ENCODE measurements at regions of chr2 and their contacts with region 1.

Region 1: DNA sequence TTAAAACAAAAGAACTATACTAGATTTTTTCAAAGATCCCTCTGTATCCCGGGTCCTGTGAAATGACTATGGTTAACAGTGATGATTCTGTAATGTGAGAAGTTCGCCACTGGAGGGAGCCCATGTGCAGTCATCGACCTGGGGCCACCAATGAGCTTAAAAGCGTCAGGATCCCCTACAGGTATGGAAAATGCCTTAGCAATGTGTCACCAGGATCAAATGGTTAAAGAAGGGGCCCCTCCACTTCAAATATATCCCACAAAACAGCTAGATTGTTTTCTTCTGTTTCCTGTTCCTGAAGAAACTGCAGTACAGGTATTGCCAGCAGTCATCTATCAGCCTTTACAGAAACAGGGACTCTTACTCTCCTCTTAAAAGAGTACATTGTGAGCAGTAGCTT is 15.3 kb downstream of the CHRNA1 start:
- DNase-seq: peak; percentile 85
- ATAC-seq: peak; percentile 94
- H3K4me3 Mint-ChIP-seq: no peak overlapping the region
- H3K27ac Mint-ChIP-seq: peak overlapping the region; percentile 4; the same call in 1 of the 2 replicates
- H3K4me1 Mint-ChIP-seq: peaks cover 33% of the 10 kb centered on the region
- H3K27me3 Mint-ChIP-seq: no peaks in the 10 kb centered on the region
- CTCF ChIP-seq: peak; percentile 69

Region 2: GRCh38 chr2:174495350-174496012 is 253.5 kb before region 1 on chr2:
- CTCF ChIA-PET with region 1: no interaction called
- POLR2A ChIA-PET with region 1: no interaction called
- DNase-seq: no peak
- ATAC-seq: peak; percentile 92
- H3K4me3 Mint-ChIP-seq: no peak overlapping the region
- H3K27ac Mint-ChIP-seq: no peak overlapping the region
- H3K4me1 Mint-ChIP-seq: peaks cover 10% of the 10 kb centered on the region
- H3K27me3 Mint-ChIP-seq: peaks cover 11% of the 10 kb centered on the region
- CTCF ChIP-seq: no peak

Region 3: DNA sequence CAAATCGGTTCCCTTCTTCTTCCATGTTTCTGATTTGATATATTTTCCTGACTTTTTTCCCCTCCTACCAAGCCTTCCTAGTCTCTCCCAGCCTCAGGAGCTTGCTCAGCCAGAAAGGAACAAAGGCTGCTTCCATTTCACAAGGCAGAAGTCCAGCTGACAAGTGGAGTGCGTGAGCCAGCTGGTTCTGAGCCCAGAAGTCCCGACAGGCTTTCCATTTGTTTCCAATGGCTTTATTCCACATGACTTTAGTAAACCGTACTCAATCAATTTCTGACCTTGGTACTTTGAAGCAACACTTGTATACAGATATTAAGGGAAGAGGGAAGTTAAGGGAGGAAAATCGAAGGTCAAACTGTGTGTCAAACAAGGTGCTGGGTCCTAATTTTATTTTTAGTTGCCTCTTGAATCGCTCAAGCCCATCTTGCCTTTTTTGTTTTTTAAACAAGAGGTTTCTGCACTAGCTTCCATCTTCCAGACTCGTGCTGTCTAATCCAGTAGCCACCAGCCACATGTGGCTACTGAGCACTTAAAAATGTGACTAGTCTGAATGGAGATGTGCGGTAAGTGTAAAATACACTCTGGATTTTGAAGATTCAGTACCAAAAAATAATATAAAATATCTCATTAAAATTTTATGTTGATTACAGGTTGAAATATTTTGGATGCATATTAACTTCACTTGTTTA is 187.5 kb before region 1 on chr2:
- CTCF ChIA-PET with region 1: no interaction called
- POLR2A ChIA-PET with region 1: no interaction called
- DNase-seq: no peak
- ATAC-seq: peak; percentile 60
- H3K4me3 Mint-ChIP-seq: no peak overlapping the region
- H3K27ac Mint-ChIP-seq: no peak overlapping the region
- H3K4me1 Mint-ChIP-seq: peaks cover 5% of the 10 kb centered on the region; the same call in 1 of the 2 replicates
- H3K27me3 Mint-ChIP-seq: peaks cover 3% of the 10 kb centered on the region; the same call in 1 of the 2 replicates
- CTCF ChIP-seq: no peak

Region 4: GRCh38 chr2:174729797-174730697 is 18.9 kb before region 1 on chr2:
- CTCF ChIA-PET with region 1: interaction called, 16 read pairs
- POLR2A ChIA-PET with region 1: no interaction called
- DNase-seq: peak; percentile 65
- ATAC-seq: peak; percentile 80
- H3K4me3 Mint-ChIP-seq: peak overlapping the region; percentile 84
- H3K27ac Mint-ChIP-seq: no peak overlapping the region
- H3K4me1 Mint-ChIP-seq: peaks cover 5% of the 10 kb centered on the region
- H3K27me3 Mint-ChIP-seq: peaks cover 37% of the 10 kb centered on the region
- CTCF ChIP-seq: no peak

Region 5: DNA sequence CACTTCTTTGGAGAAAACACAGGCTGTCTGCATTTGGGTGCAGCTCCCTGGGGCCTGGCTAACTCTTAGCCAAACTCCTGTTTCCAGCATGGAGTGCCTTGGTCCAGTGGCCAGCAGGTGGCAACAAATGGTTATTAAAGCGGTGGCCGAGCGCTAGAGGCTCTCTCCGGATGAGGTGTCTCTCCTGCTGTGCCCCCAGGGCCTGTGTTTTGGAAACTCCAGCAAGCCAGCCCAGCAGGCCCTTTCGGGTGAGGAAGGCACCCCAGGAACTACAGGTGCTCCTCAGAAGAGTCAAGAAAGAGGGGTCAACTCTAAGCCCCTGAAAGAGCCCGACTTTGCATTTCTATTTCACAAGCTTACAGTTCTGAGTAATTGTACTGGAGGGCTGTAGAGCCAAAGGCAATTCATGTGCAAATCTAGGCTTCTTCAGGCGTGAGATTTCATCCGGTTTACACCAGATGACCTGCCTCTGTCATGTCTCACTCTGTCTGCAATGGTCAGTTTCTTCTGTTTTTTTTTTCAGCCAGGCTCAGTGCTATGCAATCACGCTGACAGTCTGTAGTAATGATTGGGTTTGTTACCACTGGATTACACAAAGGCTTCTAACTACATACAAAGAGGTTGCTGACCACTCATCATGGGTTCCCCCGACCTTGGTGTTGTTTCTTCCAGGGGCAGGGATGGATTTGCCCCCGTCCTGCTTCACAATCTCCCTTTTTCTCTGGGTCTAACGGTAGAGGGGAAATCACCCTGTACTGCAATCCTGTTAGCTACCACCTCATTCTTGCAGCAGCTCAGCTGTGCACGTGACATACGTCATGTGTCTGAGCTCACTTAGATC is 22.9 kb after region 1 on chr2:
- CTCF ChIA-PET with region 1: interaction called, 48 read pairs
- POLR2A ChIA-PET with region 1: interaction called, 4 read pairs
- DNase-seq: peak; percentile 90
- ATAC-seq: peak; percentile 78
- H3K4me3 Mint-ChIP-seq: peak overlapping the region; percentile 34; the same call in 1 of the 2 replicates
- H3K27ac Mint-ChIP-seq: peak overlapping the region; percentile 97
- H3K4me1 Mint-ChIP-seq: peaks cover 70% of the 10 kb centered on the region
- H3K27me3 Mint-ChIP-seq: no peaks in the 10 kb centered on the region
- CTCF ChIP-seq: peak; percentile 60; the same call in 1 of the 2 replicates

Region 6: DNA sequence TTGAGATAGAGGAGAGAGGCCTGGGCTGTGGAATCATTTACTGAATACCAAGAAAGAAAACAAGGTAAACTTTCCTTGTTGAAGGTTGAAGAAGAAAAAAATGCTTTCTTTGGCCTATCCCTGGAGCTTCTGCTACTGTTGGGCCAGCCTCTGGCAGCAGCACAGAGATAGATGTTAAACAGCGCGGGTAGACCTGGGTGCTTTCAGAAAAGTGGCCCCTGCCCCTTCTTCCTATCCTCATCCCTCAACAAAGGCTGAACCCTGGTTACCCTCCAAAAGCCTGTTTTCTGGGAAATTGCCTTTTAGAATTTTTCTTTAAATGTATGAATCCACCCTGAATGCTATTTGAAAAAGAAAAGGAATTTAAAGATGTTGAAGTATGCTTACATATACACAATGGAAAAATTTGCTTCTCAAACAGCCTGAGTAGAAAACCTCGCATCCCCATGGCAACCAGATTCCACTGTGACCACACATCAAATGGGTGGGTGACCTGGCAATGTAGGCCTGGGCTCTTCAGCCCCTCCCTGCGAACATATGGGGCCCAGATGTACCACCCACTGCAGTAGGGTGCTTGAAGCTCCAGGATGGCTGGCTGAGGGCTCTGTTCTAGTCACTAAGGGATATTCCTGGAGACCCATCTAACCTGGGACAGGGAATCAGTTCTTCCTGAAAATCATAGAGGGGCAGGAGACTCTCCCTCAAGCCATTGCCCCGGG is 38.7 kb after region 1 on chr2:
- CTCF ChIA-PET with region 1: interaction called, 10 read pairs
- POLR2A ChIA-PET with region 1: no interaction called
- DNase-seq: peak; percentile 68
- ATAC-seq: peak; percentile 76
- H3K4me3 Mint-ChIP-seq: peak overlapping the region; percentile 18; the same call in 1 of the 2 replicates
- H3K27ac Mint-ChIP-seq: peak overlapping the region; percentile 97
- H3K4me1 Mint-ChIP-seq: peaks cover 69% of the 10 kb centered on the region
- H3K27me3 Mint-ChIP-seq: no peaks in the 10 kb centered on the region
- CTCF ChIP-seq: no peak

Region 7: GRCh38 chr2:175004980-175005732 is 256.2 kb after region 1 on chr2 and contains the start of gene CHN1:
- CTCF ChIA-PET with region 1: interaction called, 20 read pairs
- POLR2A ChIA-PET with region 1: interaction called, 3 read pairs
- DNase-seq: peak; percentile 81
- ATAC-seq: peak; percentile 79
- H3K4me3 Mint-ChIP-seq: peak within 1 kb of the TSS; percentile 89
- H3K27ac Mint-ChIP-seq: peak within 1 kb of the TSS; percentile 91
- H3K4me1 Mint-ChIP-seq: peaks cover 51% of the 10 kb centered on the region
- H3K27me3 Mint-ChIP-seq: no peaks in the 10 kb centered on the region
- CTCF ChIP-seq: no peak
- total RNA-seq, gene CHN1: 26.1 to 30.0 TPM (median 28.0 TPM) in 3 replicates

Measured in WTC11 (cell line).